Breast epithelium (tissue), 4 donors: ENCODE measurements at regions of chr21 and their contacts with region 1.

Region 1: DNA sequence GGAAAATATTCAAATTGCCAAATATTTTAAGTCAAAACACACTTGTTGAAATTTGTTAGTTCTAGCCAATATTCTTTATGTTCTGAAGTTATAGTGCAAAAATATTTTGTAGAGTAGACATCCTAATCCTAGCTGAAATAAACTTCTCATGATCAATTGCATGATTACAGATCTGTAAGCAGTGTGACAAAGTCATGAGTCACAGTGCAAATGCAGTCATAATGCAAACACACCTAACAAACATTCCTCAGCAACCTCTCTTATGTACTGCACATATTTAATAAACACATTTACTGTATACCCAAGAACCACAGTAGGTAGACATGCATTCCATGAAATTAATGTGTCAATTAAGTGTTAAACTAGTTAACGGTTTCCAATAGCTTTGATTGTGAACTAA is 1857.4 kb downstream of the NCAM2 start:
- DNase-seq: no peak
- H3K4me3 ChIP-seq: no peak overlapping the region
- H3K27ac ChIP-seq: no peak overlapping the region
- H3K4me1 ChIP-seq: no peaks in the 10 kb centered on the region
- H3K27me3 ChIP-seq: no peaks in the 10 kb centered on the region
- CTCF ChIP-seq: no peak
- POLR2A ChIP-seq: no peak

Region 2: GRCh38 chr21:22871692-22872091 is 16.1 kb after region 1 on chr21:
- intact Hi-C with region 1: no loop called
- DNase-seq: no peak
- H3K4me3 ChIP-seq: no peak overlapping the region
- H3K27ac ChIP-seq: no peak overlapping the region
- H3K4me1 ChIP-seq: no peaks in the 10 kb centered on the region
- H3K27me3 ChIP-seq: no peaks in the 10 kb centered on the region
- CTCF ChIP-seq: no peak
- POLR2A ChIP-seq: no peak

Region 3: GRCh38 chr21:23045955-23046354 is 190.4 kb after region 1 on chr21:
- intact Hi-C with region 1: no loop called
- DNase-seq: no peak
- H3K4me3 ChIP-seq: no peak overlapping the region
- H3K27ac ChIP-seq: no peak overlapping the region
- H3K4me1 ChIP-seq: no peaks in the 10 kb centered on the region
- H3K27me3 ChIP-seq: no peaks in the 10 kb centered on the region
- CTCF ChIP-seq: no peak
- POLR2A ChIP-seq: no peak

Region 4: GRCh38 chr21:24050231-24050630 is 1194.7 kb after region 1 on chr21:
- intact Hi-C with region 1: loop called (anchors 10 kb)
- DNase-seq: no peak
- H3K4me3 ChIP-seq: no peak overlapping the region
- H3K27ac ChIP-seq: no peak overlapping the region
- H3K4me1 ChIP-seq: no peaks in the 10 kb centered on the region
- H3K27me3 ChIP-seq: no peaks in the 10 kb centered on the region
- CTCF ChIP-seq: no peak
- POLR2A ChIP-seq: no peak